Right ventricle myocardium inferior (tissue), 1 donor: ENCODE measurements at regions of chr2 and their contacts with region 1.

Region 1: GRCh38 chr2:120914839-120915521 is 179.3 kb downstream of the GLI2 start:
- DNase-seq: peak; percentile 91
- ATAC-seq: peak; percentile 82

Region 2: DNA sequence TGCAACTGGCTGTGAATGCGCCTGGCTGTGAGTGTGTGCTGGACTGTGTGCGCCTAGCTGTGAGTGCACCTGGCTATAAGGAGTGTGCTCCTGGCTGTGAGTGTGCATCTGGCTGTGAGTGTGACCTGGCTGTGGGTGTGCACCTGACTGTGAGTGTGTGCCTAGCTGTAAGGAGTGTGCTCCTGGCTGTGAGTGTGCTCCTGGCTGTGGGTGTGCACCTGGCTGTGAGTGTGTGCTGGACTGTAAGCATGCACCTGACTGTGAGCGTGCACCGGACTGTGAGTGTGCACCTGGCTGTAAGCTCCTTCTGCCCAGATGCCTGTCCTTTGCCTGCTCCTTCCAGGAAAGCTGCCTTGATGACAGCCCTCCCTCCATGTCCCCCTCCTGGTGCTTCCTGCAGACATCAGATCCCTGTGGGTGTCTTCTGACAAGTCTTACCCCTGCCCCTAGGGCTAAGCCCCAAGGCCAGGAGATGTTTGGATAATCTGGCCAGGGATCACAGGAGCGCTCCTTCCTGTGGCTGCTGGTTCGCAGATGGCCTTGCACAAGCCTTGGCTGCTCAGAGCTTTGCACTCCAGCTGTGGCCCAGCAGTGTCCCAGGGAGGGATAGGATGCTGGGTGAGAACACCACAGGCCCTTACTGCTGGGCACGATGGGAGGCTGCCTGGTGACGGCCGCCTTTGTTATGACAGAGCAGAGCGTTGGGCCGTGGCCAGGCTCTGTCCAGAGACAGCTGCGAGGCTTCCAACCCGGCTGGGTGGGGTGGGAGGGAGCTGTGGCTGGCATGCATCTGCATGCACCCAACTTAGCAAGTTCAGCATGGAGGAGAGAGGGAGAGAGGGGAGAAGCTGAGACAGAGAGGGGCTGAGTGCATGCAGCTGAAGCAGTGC is 89.4 kb before region 1 on chr2:
- intact Hi-C with region 1: loop called (anchors 10 kb)
- DNase-seq: peak; percentile 89
- ATAC-seq: peak; percentile 80

Region 3: DNA sequence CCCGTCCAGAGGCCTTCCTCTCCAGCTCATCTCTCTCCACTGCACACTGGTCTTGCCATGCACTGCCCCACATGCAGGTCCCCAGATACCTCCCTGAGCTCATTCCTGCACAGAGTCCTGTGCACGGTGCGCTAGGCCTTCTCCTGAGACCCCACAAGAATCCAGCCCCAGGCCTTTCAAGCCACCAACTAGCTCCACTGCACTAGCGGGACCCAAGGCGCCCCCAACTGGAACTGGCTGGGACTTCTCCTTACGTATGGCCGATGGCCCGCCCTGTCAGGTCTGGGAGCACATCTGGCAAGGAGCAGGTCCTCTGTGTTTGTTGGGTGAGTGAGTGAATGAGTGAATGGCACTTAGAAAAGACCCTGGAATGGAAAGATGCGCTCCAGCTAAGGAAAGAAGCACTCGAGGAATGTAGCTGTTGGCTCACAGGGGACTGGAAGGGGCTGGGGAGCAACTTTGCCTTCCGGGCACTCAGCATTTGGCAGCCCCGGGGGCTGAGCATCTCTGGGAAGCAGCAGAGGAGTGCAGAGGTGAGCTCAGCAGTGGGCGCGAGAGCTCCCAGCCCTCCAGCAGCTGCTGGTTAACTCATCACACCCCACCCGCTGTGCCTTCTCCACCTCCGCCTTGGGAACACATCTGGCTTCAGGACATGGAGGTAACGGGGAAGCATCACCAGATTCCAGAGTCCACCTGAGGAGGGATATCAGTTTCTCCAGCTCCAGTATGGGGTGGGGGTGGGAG is 43.8 kb after region 1 on chr2:
- intact Hi-C with region 1: loop called (anchors 1 kb)
- DNase-seq: peak; percentile 49
- ATAC-seq: no peak

Region 4: DNA sequence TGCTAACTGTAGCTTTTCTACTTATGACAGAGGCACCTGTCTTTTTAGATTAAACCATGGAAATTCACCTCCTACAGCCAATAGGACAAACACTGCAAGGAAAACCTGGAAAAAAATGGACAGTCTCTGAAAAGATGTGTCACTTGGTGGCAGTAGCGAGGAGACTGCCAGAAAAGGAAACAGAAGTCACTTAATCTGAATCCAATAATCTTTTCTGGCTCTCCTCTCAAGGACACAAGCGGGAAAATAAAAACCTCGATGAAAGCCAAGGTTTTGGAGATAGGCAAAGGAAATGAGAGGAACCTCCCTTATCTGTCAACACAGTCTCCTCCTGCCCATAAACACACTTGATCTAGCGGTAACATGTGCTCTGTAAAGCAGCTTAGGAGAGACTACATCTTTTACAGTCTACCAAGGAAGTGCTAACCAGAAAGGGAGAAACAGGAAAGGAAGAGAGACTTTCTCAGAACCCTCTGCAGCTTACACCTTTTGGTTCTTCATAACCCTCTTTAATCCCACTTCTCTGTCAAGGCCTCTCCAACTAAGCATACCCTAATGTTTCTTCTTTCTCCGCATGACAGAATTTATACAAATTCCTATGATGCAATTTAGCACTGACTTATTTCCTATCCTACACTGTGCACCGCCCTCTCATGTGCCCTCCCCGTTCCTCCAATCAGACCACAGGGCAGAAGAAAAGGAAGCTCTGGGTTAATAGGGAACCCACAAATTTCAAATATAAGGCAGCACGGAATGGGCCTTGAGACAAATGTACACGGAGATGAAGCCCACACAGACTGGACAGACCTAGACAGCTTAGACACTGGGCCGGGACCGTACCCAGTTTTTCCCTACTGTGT is 681.5 kb after region 1 on chr2:
- intact Hi-C with region 1: no loop called
- DNase-seq: peak; percentile 64
- ATAC-seq: peak; percentile 78